Esophagus muscularis mucosa (tissue), 4 donors: ENCODE measurements at regions of chr15 and their contacts with region 1.

Region 1: DNA sequence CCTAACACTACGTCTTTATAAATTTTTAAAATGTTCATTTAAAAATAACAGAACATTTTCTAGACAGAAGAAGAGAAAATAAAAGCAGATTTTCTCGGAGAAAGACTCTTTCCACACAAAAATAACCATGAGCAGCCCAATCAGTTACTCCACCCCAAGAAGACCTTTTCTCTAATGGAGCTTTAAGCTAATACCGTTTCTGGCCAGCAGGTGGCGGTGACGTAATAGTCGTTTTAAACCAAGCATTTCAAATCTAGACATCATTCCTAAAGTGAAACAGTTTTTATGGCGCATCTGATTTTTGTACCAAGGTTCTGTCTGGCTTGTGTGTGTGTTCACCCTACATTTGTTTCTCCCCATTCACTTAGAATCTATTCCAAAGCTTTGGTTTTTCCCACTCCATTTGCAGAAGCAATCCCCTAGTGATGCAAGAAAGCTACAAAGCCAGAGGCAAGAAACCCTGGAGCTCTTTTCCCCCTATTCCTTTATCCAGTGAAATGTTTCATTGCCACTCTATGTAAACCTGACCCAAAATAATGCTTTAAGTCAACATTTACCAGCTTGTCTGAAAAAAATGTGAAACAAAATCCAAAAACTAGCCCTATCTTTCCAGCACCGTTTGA is 336.7 kb upstream of the IGF1R start:
- DNase-seq: peak; percentile 98
- H3K4me3 ChIP-seq: no peak overlapping the region
- H3K27ac ChIP-seq: no peak overlapping the region
- H3K4me1 ChIP-seq: peaks cover 0 to 6% (median 3%) of the 10 kb centered on the region in 4 donors
- H3K27me3 ChIP-seq: peaks cover 0 to 3% (median 0%) of the 10 kb centered on the region in 4 donors
- CTCF ChIP-seq: peak; percentile 82 to 86 (median 85)
- EP300 ChIP-seq: no peak
- POLR2A ChIP-seq: no peak

Region 2: GRCh38 chr15:98421419-98422129 is 109.9 kb after region 1 on chr15:
- intact Hi-C with region 1: loop called (anchors 1 kb)
- DNase-seq: no peak
- H3K4me3 ChIP-seq: peak overlapping the region; percentile 28 to 51 (median 30)
- H3K27ac ChIP-seq: no peak overlapping the region
- H3K4me1 ChIP-seq: peaks cover 12 to 54% (median 50%) of the 10 kb centered on the region in 4 donors
- H3K27me3 ChIP-seq: peaks cover 0 to 14% (median 5%) of the 10 kb centered on the region in 4 donors
- CTCF ChIP-seq: peak; percentile 94 to 100 (median 99)
- EP300 ChIP-seq: no peak
- POLR2A ChIP-seq: no peak